Calu3 (cell line): ENCODE measurements at regions of chr1 and their contacts with region 1.

Region 1: GRCh38 chr1:36099681-36100341 is 11.1 kb downstream of the ADPRS start:
- DNase-seq: peak; percentile 89
- H3K4me3 Mint-ChIP-seq: peak overlapping the region; percentile 51
- H3K27ac Mint-ChIP-seq: peak overlapping the region; percentile 47
- H3K4me1 Mint-ChIP-seq: peaks cover 10% of the 10 kb centered on the region
- H3K27me3 Mint-ChIP-seq: no peaks in the 10 kb centered on the region
- CTCF ChIP-seq: peak; percentile 95

Region 2: DNA sequence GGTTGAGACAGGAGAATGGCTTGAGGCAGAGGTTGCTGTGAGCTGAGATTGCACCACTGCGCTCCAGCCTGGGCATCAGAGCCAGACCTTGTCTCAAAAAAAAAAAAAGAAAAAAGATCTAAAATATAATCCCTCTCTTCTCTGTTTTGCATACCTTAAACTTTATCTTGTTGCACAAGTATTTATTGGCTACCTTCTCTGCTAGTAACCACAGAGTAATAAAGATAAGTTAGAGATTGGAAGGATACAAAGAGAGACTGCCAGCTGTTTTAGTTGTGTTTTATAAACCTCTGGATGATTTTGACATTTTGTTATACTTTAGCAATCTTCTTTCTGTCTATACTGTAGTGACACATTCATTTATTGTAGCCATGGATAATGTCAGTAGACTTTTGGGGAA is 141.3 kb before region 1 on chr1:
- CTCF ChIA-PET with region 1: no interaction called
- intact Hi-C with region 1: no loop called
- DNase-seq: no peak
- H3K4me3 Mint-ChIP-seq: no peak overlapping the region
- H3K27ac Mint-ChIP-seq: no peak overlapping the region
- H3K4me1 Mint-ChIP-seq: no peaks in the 10 kb centered on the region
- H3K27me3 Mint-ChIP-seq: no peaks in the 10 kb centered on the region
- CTCF ChIP-seq: no peak

Region 3: GRCh38 chr1:36134505-36135329 is 34.9 kb after region 1 on chr1:
- CTCF ChIA-PET with region 1: interaction called, 16 read pairs
- intact Hi-C with region 1: loop called (anchors 1 kb)
- DNase-seq: peak; percentile 66
- H3K4me3 Mint-ChIP-seq: no peak overlapping the region
- H3K27ac Mint-ChIP-seq: peak overlapping the region; percentile 63
- H3K4me1 Mint-ChIP-seq: peaks cover 30% of the 10 kb centered on the region
- H3K27me3 Mint-ChIP-seq: no peaks in the 10 kb centered on the region
- CTCF ChIP-seq: peak; percentile 88

Region 4: GRCh38 chr1:36187800-36188593 is 88.2 kb after region 1 on chr1:
- CTCF ChIA-PET with region 1: interaction called, 4 read pairs
- intact Hi-C with region 1: loop called (anchors 1 kb)
- DNase-seq: peak; percentile 84
- H3K4me3 Mint-ChIP-seq: no peak overlapping the region
- H3K27ac Mint-ChIP-seq: peak overlapping the region; percentile 84
- H3K4me1 Mint-ChIP-seq: peaks cover 10% of the 10 kb centered on the region
- H3K27me3 Mint-ChIP-seq: no peaks in the 10 kb centered on the region
- CTCF ChIP-seq: peak; percentile 84